ENCODE measurements at regions of chr2 and their contacts with region 1.

Region 1: GRCh38 chr2:205650450-205650849 is 31.9 kb upstream of the NRP2 start:
- DNase-seq: peak; percentile 29
- H3K4me3 ChIP-seq: no peak overlapping the region
- H3K27ac ChIP-seq: no peak overlapping the region
- H3K4me1 ChIP-seq: peaks cover 3% of the 10 kb centered on the region
- H3K27me3 ChIP-seq: peaks cover 0 to under 1% of the 10 kb centered on the region in 2 experiments
- CTCF ChIP-seq: no peak
- POLR2A ChIP-seq: no peak

Region 2: GRCh38 chr2:205617905-205618304 is 32.5 kb before region 1 on chr2:
- CTCF ChIA-PET with region 1: no interaction called
- POLR2A ChIA-PET with region 1: no interaction called
- dilution Hi-C with region 1: no loop called
- intact Hi-C with region 1: loop called (anchors 1 kb)
- DNase-seq: no peak
- H3K4me3 ChIP-seq: no peak overlapping the region
- H3K27ac ChIP-seq: no peak overlapping the region
- H3K4me1 ChIP-seq: no peaks in the 10 kb centered on the region
- H3K27me3 ChIP-seq: no peaks in the 10 kb centered on the region
- CTCF ChIP-seq: no peak
- POLR2A ChIP-seq: no peak